ENCODE measurements at regions of chr6 and their contacts with region 1.

Region 1: GRCh38 chr6:139965393-139965792 is 590.9 kb upstream of the CITED2 start:
- DNase-seq: no peak
- ATAC-seq: peak; percentile 50

Region 2: GRCh38 chr6:139764498-139764986 is 200.9 kb before region 1 on chr6:
- intact Hi-C with region 1: loop called (anchors 5 kb)
- DNase-seq: no peak
- ATAC-seq: peak; percentile 94

Region 3: DNA sequence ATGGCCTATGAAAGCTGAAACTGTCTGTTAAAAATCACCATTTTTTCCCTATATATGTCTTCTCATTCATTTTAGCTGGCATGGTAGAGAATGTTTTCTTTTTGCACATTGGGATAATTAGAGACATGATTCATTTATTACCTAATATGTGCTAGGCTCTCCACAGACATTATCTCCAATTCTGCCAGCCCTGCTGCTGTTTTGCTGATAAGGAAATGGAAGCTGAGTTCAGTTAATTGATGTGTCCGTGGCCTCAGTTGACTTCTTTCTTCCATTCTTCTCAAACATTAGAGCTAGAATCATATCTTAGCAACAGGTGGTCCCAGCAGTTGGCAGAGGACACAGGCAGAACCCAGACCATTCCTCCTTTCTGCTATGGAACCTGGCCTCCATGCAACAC is 53.2 kb after region 1 on chr6:
- intact Hi-C with region 1: no loop called
- DNase-seq: no peak
- ATAC-seq: no peak

Region 4: DNA sequence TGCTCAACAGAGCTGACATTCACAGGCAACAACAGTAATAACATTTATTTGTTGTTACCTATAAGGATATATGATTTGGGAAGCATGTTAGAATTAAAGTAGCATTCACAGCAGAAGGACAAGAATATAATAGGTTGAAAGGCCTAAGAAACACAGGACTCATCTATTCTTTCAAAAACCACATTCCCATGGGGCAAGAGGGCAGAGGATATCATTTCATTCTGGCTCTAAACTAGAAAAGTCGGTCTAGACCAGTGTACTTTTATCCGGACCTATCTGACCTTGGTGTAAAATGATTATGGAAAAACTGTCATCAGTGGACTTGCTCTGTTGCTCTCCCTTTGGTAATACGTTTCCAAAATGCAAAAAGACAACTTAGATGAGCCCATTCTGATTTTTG is 323.8 kb after region 1 on chr6:
- intact Hi-C with region 1: no loop called
- DNase-seq: no peak
- ATAC-seq: no peak

Region 5: GRCh38 chr6:140436013-140436811 is 470.8 kb after region 1 on chr6:
- intact Hi-C with region 1: loop called (anchors 10 kb)
- DNase-seq: no peak
- ATAC-seq: no peak

Measured in Right ventricle myocardium inferior (tissue), 1 donor.